Posterior vena cava (tissue), 2 donors: ENCODE measurements at regions of chr2 and their contacts with region 1.

Region 1: GRCh38 chr2:111022633-111023032 is 98.1 kb upstream of the BCL2L11 start:
- DNase-seq: no peak

Region 2: DNA sequence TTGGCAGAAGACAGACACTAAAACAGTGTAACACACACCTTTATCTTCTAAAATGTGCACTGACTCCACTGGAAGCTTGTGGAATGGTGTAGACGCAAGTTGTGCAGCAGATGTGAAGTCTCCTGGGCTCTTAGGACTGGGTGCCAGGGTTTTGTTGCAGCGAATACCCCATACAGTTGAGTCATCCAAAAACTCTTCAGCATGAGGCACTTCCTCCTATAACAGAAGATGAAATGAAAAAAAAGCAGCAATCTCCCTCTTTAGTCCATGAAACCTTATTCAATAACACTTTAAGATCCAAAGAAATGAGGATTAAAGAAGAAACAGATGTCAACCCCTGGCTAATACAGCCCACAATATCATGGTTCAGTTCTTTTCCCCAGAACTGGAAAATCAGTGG is 366.9 kb before region 1 on chr2:
- intact Hi-C with region 1: no loop called
- DNase-seq: no peak

Region 3: GRCh38 chr2:110960954-110961353 is 61.7 kb before region 1 on chr2:
- intact Hi-C with region 1: no loop called
- DNase-seq: no peak

Region 4: GRCh38 chr2:111194835-111195621 is 172.4 kb after region 1 on chr2:
- intact Hi-C with region 1: loop called in 1 of 2 experiments (anchors 5 kb)
- DNase-seq: no peak